ENCODE measurements at regions of chr12 and their contacts with region 1.

Region 1: DNA sequence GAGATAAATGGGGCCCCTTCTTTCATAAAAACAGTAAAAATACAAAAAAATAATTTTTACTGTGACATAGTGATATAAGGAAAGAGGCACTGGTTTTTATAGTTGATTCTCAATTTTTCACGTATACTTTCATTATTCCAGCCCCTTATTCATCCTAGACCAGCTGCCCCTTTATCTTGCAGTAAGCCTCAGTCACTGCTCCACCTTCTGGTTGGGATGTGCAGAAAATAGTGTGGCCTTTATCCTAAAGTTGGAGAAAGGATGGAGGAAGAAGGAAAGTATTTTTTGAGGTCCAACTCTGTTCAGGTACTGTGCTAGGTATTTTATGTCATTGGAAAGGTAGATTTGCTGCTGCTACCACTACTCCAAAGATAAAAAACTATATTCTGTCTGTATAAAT is 172.7 kb downstream of the ANO6 start:
- DNase-seq: peak; percentile 15
- H3K4me3 ChIP-seq: no peak overlapping the region
- H3K27ac ChIP-seq: no peak overlapping the region
- H3K4me1 ChIP-seq: no peaks in the 10 kb centered on the region
- H3K27me3 ChIP-seq: no peaks in the 10 kb centered on the region
- CTCF ChIP-seq: peak; percentile 35 to 49 (median 45)
- EP300 ChIP-seq: no peak
- POLR2A ChIP-seq: no peak

Region 2: DNA sequence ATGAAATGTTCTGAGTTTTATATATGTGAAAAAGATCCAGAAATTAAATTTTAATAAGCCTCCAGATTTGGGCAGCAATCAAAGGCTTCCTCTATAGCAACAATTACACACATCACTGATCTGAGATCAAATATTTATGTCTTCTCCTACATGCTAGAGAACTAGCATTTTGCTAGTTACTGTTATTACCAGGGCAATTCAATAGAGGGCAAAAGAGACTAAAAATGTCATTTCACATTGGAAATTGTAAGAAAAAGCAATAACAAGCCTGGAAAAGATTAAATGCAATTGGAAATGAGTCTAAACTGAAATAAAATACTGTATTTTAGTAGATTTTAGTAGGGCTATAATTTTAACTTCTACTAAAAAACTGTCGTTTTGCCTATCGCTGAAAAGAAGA is 205.3 kb before region 1 on chr12:
- in situ Hi-C with region 1: loop called in 2 of 4 experiments (anchors 10 kb)
- intact Hi-C with region 1: loop called (anchors 10 kb)
- DNase-seq: no peak
- H3K4me3 ChIP-seq: no peak overlapping the region
- H3K27ac ChIP-seq: no peak overlapping the region
- H3K4me1 ChIP-seq: no peaks in the 10 kb centered on the region
- H3K27me3 ChIP-seq: no peaks in the 10 kb centered on the region
- CTCF ChIP-seq: peak in 4 of 5 experiments; percentile 12 to 41 (median 17)
- EP300 ChIP-seq: no peak
- POLR2A ChIP-seq: no peak

Region 3: GRCh38 chr12:45215419-45216229 is 172.9 kb before region 1 on chr12 and contains the start of gene ANO6:
- in situ Hi-C with region 1: loop called in 1 of 4 experiments (anchors 25 kb)
- intact Hi-C with region 1: no loop called
- DNase-seq: peak; percentile 92
- H3K4me3 ChIP-seq: peak within 1 kb of the TSS; percentile 55 to 82 (median 78)
- H3K27ac ChIP-seq: peak within 1 kb of the TSS; percentile 91 to 97 (median 96)
- H3K4me1 ChIP-seq: peaks cover 10 to 46% (median 14%) of the 10 kb centered on the region in 4 donors
- H3K27me3 ChIP-seq: peaks cover 3% of the 10 kb centered on the region
- CTCF ChIP-seq: peak in 1 of 5 experiments; percentile 1
- EP300 ChIP-seq: no peak
- POLR2A ChIP-seq: peak; percentile 78
- total RNA-seq, gene ANO6: 16.9 to 23.0 (median 20.4) TPM

Region 4: GRCh38 chr12:45284131-45284901 is 104.2 kb before region 1 on chr12:
- in situ Hi-C with region 1: no loop called
- intact Hi-C with region 1: no loop called
- DNase-seq: no peak
- H3K4me3 ChIP-seq: no peak overlapping the region
- H3K27ac ChIP-seq: peak overlapping the region in 3 of 4 donors; percentile 21 to 59 (median 27)
- H3K4me1 ChIP-seq: peaks cover 6 to 28% (median 18%) of the 10 kb centered on the region in 4 donors
- H3K27me3 ChIP-seq: peaks cover 78% of the 10 kb centered on the region
- CTCF ChIP-seq: no peak
- EP300 ChIP-seq: no peak
- POLR2A ChIP-seq: no peak

Region 5: GRCh38 chr12:45435945-45436710 is 47.6 kb after region 1 on chr12:
- in situ Hi-C with region 1: no loop called
- intact Hi-C with region 1: no loop called
- DNase-seq: no peak
- H3K4me3 ChIP-seq: no peak overlapping the region
- H3K27ac ChIP-seq: no peak overlapping the region
- H3K4me1 ChIP-seq: no peaks in the 10 kb centered on the region
- H3K27me3 ChIP-seq: no peaks in the 10 kb centered on the region
- CTCF ChIP-seq: no peak
- EP300 ChIP-seq: no peak
- POLR2A ChIP-seq: no peak

Region 6: DNA sequence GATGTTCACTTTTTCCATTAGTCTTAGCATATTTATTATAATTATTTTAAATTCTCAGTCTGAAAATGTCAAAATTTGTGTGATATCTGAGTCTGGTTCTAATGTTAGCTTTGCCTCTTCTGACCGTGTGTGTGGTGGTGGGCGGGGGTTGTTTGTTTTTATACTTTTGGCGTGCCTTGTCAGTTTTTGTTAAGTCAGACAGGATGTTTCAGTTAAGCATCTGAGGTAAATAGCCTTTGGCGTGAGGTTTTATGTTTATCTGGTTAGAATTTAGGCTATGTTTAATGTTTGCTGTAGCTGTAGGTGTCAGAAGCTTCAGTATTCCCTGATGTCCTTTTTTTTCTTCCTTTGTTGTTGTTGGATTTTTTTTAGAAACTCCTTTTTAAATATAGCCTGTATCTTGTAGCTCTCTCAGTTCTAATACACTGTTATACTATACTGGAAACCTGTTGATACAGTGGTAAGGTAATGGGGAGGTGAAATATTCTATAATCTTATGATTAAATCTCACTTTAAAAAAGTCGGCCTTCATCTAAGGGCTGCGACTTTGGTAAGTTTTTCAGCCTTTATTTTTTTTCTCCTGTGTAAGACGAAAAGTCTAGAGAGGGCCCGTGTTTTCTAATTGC is 490.2 kb after region 1 on chr12:
- in situ Hi-C with region 1: no loop called
- intact Hi-C with region 1: no loop called
- DNase-seq: no peak
- H3K4me3 ChIP-seq: no peak overlapping the region
- H3K27ac ChIP-seq: peak overlapping the region in 1 of 4 donors; percentile 20
- H3K4me1 ChIP-seq: peaks cover 0 to 25% (median 0%) of the 10 kb centered on the region in 4 donors
- H3K27me3 ChIP-seq: no peaks in the 10 kb centered on the region
- CTCF ChIP-seq: no peak
- EP300 ChIP-seq: no peak
- POLR2A ChIP-seq: no peak

Region 7: GRCh38 chr12:46049665-46050064 is 661.1 kb after region 1 on chr12:
- in situ Hi-C with region 1: no loop called
- intact Hi-C with region 1: no loop called
- DNase-seq: no peak
- H3K4me3 ChIP-seq: no peak overlapping the region
- H3K27ac ChIP-seq: no peak overlapping the region
- H3K4me1 ChIP-seq: no peaks in the 10 kb centered on the region
- H3K27me3 ChIP-seq: no peaks in the 10 kb centered on the region
- CTCF ChIP-seq: no peak
- EP300 ChIP-seq: no peak
- POLR2A ChIP-seq: no peak

Measured in transverse colon (tissue), 4 donors.